Psoas muscle (tissue), 8 donors: ENCODE measurements at regions of chr1 and their contacts with region 1.

Region 1: DNA sequence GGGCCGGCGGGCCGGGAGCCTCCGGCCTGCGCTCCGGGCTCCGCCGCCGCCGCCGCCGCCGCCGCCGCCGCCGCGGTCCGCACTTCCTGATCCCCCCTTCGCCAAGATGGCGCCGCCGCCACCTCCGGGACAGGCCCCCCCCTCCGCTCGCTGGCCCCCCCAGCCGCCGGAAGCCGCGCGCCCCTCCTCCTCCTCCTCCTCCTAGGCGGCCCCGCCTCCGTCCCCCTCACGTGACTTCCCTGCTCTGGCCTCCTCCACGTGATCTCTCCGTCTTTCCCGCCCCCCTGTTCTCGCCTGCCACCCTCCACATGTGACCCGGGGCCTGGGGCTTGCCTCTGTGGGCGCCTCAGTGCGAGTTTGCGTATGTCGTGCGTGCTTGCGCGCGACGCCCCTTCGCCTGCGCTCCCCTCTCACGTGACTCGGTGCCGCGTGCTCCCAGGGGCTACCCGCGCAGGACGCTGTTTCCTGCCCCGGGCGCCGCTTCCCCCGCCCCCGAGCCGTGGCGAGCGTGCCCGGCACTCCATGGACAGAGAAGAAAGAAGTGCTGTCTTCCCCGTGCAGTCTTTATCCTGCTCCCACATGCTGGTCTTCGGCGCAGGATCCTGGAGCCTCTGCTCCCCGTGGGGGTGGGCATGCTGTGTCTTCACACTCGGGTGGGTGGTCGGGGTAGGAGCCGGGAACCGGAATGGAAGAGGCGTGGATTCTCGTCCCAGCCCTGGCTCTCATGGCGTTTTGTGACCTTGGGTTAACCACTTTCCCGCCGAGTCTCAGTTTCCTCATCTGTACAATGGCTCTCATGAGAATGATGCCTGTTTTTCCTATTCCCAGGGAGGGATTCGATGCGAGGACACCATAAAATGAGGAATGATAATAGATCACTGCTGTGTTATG is at the start of gene UBE2Q1:
- DNase-seq: peak; percentile 99 to 100
- ATAC-seq: peak; percentile 95 to 97 (median 96)
- H3K4me3 ChIP-seq: peak within 1 kb of the TSS; percentile 91
- H3K27ac ChIP-seq: peak within 1 kb of the TSS; percentile 97
- H3K4me1 ChIP-seq: peaks cover 35% of the 10 kb centered on the region
- H3K27me3 ChIP-seq: no peaks in the 10 kb centered on the region
- CTCF ChIP-seq: no peak
- total RNA-seq, gene UBE2Q1: 43.1 to 65.5 (median 54.8) TPM

Region 2: DNA sequence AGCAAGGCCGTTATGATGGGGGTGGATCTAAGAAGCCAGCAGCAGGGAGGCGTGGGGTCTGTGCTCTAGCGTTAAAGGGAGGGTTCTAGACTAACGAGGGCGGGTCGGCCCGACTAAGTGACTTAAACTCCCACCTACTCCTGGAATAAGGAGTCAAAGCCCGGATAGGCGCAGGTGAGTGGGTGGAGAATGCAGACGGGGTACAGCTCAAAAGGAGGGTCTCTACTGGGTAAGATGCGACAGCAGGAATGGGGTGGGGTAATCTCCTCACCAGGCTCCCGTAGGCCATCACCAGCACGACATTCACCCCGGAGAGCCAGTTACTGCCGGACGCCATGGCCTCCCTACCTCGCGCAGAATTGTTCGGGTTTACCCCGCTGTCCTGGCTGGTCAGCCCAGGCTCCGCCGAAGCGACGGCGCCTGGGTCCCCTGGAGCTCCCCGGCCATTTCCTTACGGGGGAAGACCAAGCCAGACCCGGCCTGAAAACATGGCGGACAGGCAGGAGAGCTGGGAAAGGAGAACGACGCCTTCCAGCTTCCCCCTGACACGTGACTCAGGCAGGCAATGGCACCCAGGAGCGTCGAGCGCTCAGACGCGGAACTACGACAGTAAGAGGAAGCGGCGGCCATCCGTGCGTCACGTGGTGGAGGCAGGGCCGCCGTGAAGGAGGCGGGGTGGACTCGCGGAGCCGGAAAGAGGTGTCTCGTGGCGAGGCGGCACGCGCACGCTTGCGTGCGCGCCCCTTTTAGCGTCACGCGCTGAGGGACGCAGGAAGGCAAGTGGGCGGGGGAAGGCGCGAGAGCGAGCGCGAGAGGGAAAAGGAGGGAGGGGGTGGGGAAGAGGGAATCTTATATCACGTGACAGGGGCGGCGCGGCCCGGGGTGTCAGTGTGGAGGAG is 338.5 kb before region 1 on chr1 and contains the start of gene UBAP2L:
- intact Hi-C with region 1: loop called in 1 of 2 experiments (anchors 5 kb)
- DNase-seq: peak; percentile 100
- ATAC-seq: peak; percentile 95 to 97 (median 96)
- H3K4me3 ChIP-seq: peak within 1 kb of the TSS; percentile 96
- H3K27ac ChIP-seq: peak within 1 kb of the TSS; percentile 99
- H3K4me1 ChIP-seq: peaks cover 54% of the 10 kb centered on the region
- H3K27me3 ChIP-seq: no peaks in the 10 kb centered on the region
- CTCF ChIP-seq: no peak
- total RNA-seq, gene UBAP2L: 83.9 to 121 (median 87.5) TPM

Region 3: GRCh38 chr1:154419620-154420571 is 138.9 kb before region 1 on chr1:
- intact Hi-C with region 1: no loop called
- DNase-seq: peak; percentile 90 to 96
- ATAC-seq: peak; percentile 79 to 83 (median 81)
- H3K4me3 ChIP-seq: peak overlapping the region; percentile 48
- H3K27ac ChIP-seq: peak overlapping the region; percentile 98
- H3K4me1 ChIP-seq: peaks cover 92% of the 10 kb centered on the region
- H3K27me3 ChIP-seq: no peaks in the 10 kb centered on the region
- CTCF ChIP-seq: no peak

Region 4: GRCh38 chr1:154747740-154748404 is 189.1 kb after region 1 on chr1:
- intact Hi-C with region 1: loop called in 1 of 2 experiments (anchors 10 kb)
- DNase-seq: no peak
- ATAC-seq: no peak
- H3K4me3 ChIP-seq: no peak overlapping the region
- H3K27ac ChIP-seq: no peak overlapping the region
- H3K4me1 ChIP-seq: peaks cover 20% of the 10 kb centered on the region
- H3K27me3 ChIP-seq: no peaks in the 10 kb centered on the region
- CTCF ChIP-seq: no peak

Region 5: GRCh38 chr1:154878371-154879022 is 319.7 kb after region 1 on chr1:
- intact Hi-C with region 1: loop called in 1 of 2 experiments (anchors 5 kb)
- DNase-seq: peak; percentile 80 to 91
- ATAC-seq: peak; percentile 94 to 98 (median 96)
- H3K4me3 ChIP-seq: no peak overlapping the region
- H3K27ac ChIP-seq: no peak overlapping the region
- H3K4me1 ChIP-seq: peaks cover 6% of the 10 kb centered on the region
- H3K27me3 ChIP-seq: no peaks in the 10 kb centered on the region
- CTCF ChIP-seq: peak; percentile 92

Region 6: GRCh38 chr1:155050560-155051341 is 491.9 kb after region 1 on chr1 and contains the start of gene ADAM15:
- intact Hi-C with region 1: loop called in 1 of 2 experiments (anchors 10 kb)
- DNase-seq: peak; percentile 88 to 93
- ATAC-seq: peak; percentile 87 to 89 (median 88)
- H3K4me3 ChIP-seq: peak within 1 kb of the TSS; percentile 88
- H3K27ac ChIP-seq: peak within 1 kb of the TSS; percentile 86
- H3K4me1 ChIP-seq: peaks cover 23% of the 10 kb centered on the region
- H3K27me3 ChIP-seq: no peaks in the 10 kb centered on the region
- CTCF ChIP-seq: peak; percentile 93
- total RNA-seq, gene ADAM15: 38.4 to 50.9 (median 49.3) TPM